BJ (cell line): ENCODE measurements at regions of chr20 and their contacts with region 1.

Region 1: GRCh38 chr20:31723319-31724078 is 831 bp upstream of the BCL2L1 start:
- DNase-seq: peak; percentile 77
- H3K4me3 ChIP-seq: peak overlapping the region; percentile 84
- H3K27me3 ChIP-seq: no peaks in the 10 kb centered on the region
- CTCF ChIP-seq: peak; percentile 91

Region 2: GRCh38 chr20:31630187-31630790 is 93.2 kb before region 1 on chr20:
- CTCF ChIA-PET with region 1: interaction called, 73 read pairs
- POLR2A ChIA-PET with region 1: interaction called, 5 read pairs
- DNase-seq: no peak
- H3K4me3 ChIP-seq: no peak overlapping the region
- H3K27me3 ChIP-seq: no peaks in the 10 kb centered on the region
- CTCF ChIP-seq: no peak

Region 3: GRCh38 chr20:31644701-31645100 is 78.8 kb before region 1 on chr20:
- CTCF ChIA-PET with region 1: interaction called, 16 read pairs
- POLR2A ChIA-PET with region 1: no interaction called
- DNase-seq: no peak
- H3K4me3 ChIP-seq: no peak overlapping the region
- H3K27me3 ChIP-seq: peaks cover 1% of the 10 kb centered on the region; the same call in 1 of the 2 replicates
- CTCF ChIP-seq: no peak

Region 4: DNA sequence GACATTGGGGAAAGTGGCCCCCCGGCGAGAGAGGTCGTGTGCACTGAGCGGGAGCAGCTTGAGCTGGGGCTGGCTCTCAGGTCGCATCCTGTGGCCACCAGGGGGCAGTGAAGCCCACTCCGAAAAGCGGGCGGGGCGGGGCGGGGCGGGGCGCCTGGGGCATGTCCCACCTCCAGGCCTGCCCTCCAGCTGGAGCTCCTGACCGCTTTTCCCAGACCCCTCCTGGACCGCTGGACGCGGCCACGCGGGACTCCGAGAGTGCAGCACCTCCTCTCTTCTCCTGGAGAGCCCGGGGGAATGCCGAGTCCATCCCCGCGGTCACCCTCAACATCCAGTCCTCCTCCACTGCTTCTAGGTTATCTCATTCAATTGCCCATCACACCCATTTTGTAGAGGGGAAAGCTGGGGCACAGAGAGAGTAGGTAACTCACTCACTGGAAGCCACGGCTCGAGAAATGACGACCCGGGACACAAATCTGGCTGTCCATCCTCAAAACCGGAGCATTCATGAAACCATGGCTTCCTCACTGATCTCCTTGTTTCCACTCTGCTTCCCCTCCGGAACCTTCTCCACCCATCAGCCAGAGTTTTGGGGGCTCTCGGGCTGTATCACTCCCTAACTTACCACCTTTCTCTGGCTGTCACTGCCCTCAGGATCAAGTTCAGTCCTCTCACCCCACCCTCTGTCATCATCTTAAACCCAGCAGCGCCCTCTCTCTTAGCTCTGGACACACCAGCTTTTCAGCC is 61.7 kb before region 1 on chr20:
- CTCF ChIA-PET with region 1: interaction called, 287 read pairs
- POLR2A ChIA-PET with region 1: interaction called, 8 read pairs
- DNase-seq: no peak
- H3K4me3 ChIP-seq: peak overlapping the region; percentile 23
- H3K27me3 ChIP-seq: no peaks in the 10 kb centered on the region
- CTCF ChIP-seq: peak; percentile 86

Region 5: DNA sequence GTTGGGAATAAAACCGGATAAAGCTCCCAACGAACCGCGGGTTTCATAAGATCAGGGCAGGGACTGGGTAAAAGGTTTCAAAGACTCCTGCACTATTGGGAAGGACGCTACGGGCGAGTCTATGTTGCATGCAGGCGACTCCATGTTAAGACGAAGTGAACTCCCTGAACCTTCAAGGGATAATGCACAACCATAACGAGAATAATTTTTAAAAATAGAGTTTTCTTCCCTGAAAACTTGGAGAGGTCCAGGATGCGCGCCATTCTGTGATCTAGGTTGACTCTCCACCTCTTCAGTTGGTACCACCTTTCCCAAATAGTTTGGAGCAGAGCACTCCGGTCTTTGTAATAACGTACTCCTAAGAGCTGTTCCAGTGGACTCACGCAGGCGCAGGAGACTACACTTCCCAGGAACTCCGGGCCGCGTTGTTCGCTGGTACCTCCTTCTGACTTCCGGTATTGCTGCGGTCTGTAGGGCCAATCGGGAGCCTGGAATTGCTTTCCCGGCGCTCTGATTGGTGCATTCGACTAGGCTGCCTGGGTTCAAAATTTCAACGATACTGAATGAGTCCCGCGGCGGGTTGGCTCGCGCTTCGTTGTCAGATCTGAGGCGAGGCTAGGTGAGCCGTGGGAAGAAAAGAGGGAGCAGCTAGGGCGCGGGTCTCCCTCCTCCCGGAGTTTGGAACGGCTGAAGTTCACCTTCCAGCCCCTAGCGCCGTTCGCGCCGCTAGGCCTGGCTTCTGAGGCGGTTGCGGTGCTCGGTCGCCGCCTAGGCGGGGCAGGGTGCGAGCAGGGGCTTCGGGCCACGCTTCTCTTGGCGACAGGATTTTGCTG is 15.4 kb after region 1 on chr20 and contains the start of gene TPX2:
- CTCF ChIA-PET with region 1: interaction called, 12 read pairs
- POLR2A ChIA-PET with region 1: interaction called, 4 read pairs
- DNase-seq: peak; percentile 90
- H3K4me3 ChIP-seq: peak within 1 kb of the TSS; percentile 63
- H3K27me3 ChIP-seq: no peaks in the 10 kb centered on the region
- CTCF ChIP-seq: peak; percentile 31; the same call in 1 of the 2 replicates
- polyA plus RNA-seq, gene TPX2: 29.9 and 39.2 TPM in 2 replicates

Region 6: DNA sequence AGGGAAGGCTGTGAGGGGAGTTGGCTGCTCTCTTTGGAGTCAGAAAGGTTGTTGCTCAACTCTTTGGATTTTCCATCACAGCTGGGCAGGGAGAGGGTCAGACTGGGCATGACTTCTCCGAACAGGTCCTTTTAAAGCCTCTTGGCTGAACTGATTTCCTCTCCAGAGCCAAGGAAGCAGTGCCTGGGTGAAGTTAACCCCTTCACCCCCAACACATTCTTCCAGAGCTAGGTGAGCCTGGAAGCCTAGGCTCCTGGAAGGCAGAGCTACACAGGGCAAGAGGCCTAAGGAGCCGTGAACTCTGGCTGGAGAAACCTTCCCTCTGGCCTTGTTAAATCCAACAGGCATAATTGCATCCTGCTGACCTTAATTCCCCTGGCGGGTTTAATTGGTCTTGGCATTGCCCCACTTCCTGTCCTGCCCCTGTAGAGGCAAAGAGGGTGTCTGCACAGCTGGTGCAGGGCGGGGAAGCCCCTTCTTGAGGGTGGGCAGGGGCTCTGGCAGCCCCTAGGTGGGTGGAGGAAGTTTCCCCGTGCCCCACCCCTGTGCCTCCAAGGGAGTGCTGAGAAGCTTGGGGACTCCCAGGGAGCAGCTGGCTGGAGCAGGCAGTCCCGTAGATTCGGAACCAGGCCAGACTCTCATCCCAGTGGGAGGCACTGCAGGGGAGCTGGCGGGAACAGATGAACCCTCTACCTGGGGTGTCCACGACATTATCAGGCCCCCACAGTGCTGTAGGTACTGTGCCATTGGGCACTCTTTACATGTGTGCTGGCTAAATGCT is 92.1 kb after region 1 on chr20:
- CTCF ChIA-PET with region 1: no interaction called
- POLR2A ChIA-PET with region 1: no interaction called
- DNase-seq: no peak
- H3K4me3 ChIP-seq: no peak overlapping the region
- H3K27me3 ChIP-seq: no peaks in the 10 kb centered on the region
- CTCF ChIP-seq: no peak